T-cell (primary cell): ENCODE measurements at regions of chr11 and their contacts with region 1.

Region 1: GRCh38 chr11:127710831-127711230 is 710.3 kb upstream of the KIRREL3 start:
- DNase-seq: no peak
- ATAC-seq: no peak
- H3K4me3 ChIP-seq: no peak overlapping the region
- H3K4me3 Mint-ChIP-seq: no peak overlapping the region
- H3K27ac ChIP-seq: no peak overlapping the region
- H3K27ac Mint-ChIP-seq: no peak overlapping the region
- H3K4me1 ChIP-seq: no peaks in the 10 kb centered on the region
- H3K4me1 Mint-ChIP-seq: no peaks in the 10 kb centered on the region
- H3K27me3 ChIP-seq: no peaks in the 10 kb centered on the region
- H3K27me3 Mint-ChIP-seq: peaks cover 0 to 8% of the 10 kb centered on the region in 2 donors

Region 2: GRCh38 chr11:127137771-127138280 is 573.0 kb before region 1 on chr11:
- CTCF ChIA-PET with region 1: no interaction called
- POLR2A ChIA-PET with region 1: interaction called in 1 of 2 experiments, 10 read pairs
- DNase-seq: no peak
- ATAC-seq: no peak
- H3K4me3 ChIP-seq: no peak overlapping the region
- H3K4me3 Mint-ChIP-seq: no peak overlapping the region
- H3K27ac ChIP-seq: no peak overlapping the region
- H3K27ac Mint-ChIP-seq: no peak overlapping the region
- H3K4me1 ChIP-seq: no peaks in the 10 kb centered on the region
- H3K4me1 Mint-ChIP-seq: no peaks in the 10 kb centered on the region
- H3K27me3 ChIP-seq: no peaks in the 10 kb centered on the region
- H3K27me3 Mint-ChIP-seq: peaks cover 0 to 8% of the 10 kb centered on the region in 2 donors